Body of pancreas (tissue), 4 donors: ENCODE measurements at regions of chr9 and their contacts with region 1.

Region 1: GRCh38 chr9:124708633-124709291 is 62.3 kb downstream of the NR6A1 start:
- DNase-seq: no peak
- ATAC-seq: no peak
- H3K4me3 ChIP-seq: no peak overlapping the region
- H3K27ac ChIP-seq: no peak overlapping the region
- H3K4me1 ChIP-seq: peaks cover 15% of the 10 kb centered on the region
- H3K27me3 ChIP-seq: no peaks in the 10 kb centered on the region
- CTCF ChIP-seq: no peak
- POLR2A ChIP-seq: no peak

Region 2: DNA sequence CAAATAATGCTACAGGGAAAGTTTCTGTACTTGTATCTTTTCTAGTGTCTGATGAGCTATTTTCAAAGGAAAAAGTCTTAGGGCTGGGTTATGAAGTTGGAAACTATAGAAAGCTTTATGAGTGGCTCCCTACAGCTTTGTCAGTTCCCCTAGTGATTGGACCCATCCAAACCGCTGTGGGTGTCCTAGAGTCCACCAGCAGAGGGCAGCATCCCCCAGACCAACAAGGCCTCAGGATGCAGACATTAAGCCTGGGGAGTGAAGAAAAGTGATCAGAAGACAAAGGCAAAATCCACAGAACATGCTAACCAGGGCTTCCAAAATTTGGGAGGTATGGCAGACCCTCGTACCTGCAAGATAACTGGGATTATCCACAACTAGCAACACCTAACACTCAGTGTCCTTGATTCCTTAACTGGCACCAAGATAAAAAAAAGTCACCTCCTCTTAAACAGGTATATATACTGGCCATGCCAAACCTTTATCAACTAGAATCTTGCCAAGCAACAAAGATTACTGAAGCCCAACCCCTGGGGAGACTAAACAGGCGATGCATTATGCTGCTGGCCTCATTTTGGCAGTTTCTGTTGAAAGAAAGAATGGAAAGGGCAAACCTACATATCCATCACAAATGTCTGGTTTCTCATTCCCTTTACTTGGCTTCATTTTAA is 91.2 kb before region 1 on chr9:
- intact Hi-C with region 1: loop called (anchors 5 kb)
- DNase-seq: peak; percentile 76 to 85 (median 82)
- ATAC-seq: peak; percentile 76
- H3K4me3 ChIP-seq: no peak overlapping the region
- H3K27ac ChIP-seq: peak overlapping the region in 3 of 4 donors; percentile 46 to 71 (median 70)
- H3K4me1 ChIP-seq: peaks cover 9% of the 10 kb centered on the region
- H3K27me3 ChIP-seq: no peaks in the 10 kb centered on the region
- CTCF ChIP-seq: peak; percentile 68 to 90 (median 84)
- POLR2A ChIP-seq: no peak